Left cardiac atrium (tissue), 4 donors: ENCODE measurements at regions of chr1 and their contacts with region 1.

Region 1: DNA sequence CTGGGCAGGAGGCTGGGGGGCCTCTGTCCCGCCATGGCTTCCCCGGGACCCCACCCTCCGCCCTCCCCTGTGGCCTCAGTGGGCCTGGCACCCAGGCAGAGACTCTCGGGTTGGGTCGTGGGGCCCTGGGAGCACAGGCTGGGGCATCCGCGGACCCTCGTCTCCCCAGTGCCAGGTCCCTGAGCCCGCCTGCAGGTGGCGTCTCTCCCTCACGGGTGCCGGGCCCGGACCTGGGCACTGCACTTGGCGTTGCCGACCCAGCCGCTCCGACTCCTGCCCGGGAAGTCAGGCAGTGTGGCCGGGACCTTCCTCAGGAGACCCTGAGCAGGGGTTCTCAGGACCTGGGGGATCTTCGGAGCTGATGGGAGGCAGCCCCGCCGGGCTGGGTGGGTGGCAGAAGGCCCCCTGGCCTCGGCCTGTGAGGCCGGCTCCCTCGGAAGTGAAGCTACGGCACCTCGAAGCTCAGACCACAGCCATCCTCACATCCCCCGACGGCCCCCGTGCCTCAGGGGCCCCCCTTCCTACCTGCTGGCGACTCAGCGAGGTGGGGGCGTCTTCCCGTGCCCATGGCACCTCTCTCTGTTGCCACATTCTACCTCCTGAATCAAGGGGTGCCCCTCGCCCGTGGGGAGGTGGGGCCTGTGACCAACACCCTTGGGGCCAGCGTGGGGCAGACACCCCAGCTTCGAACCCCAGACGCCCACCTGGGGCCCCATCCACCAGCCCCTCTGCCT is 6.4 kb upstream of the C1orf159 start:
- DNase-seq: peak; percentile 87
- ATAC-seq: peak; percentile 94 to 95

Region 2: GRCh38 chr1:1253972-1254666 is 131.9 kb after region 1 on chr1:
- intact Hi-C with region 1: loop called (anchors 2 to 5 kb)
- DNase-seq: no peak
- ATAC-seq: no peak

Region 3: GRCh38 chr1:1291548-1292441 is 169.6 kb after region 1 on chr1:
- intact Hi-C with region 1: loop called in 1 of 2 experiments (anchors 2 kb)
- DNase-seq: peak; percentile 77
- ATAC-seq: peak; percentile 69 to 79

Region 4: DNA sequence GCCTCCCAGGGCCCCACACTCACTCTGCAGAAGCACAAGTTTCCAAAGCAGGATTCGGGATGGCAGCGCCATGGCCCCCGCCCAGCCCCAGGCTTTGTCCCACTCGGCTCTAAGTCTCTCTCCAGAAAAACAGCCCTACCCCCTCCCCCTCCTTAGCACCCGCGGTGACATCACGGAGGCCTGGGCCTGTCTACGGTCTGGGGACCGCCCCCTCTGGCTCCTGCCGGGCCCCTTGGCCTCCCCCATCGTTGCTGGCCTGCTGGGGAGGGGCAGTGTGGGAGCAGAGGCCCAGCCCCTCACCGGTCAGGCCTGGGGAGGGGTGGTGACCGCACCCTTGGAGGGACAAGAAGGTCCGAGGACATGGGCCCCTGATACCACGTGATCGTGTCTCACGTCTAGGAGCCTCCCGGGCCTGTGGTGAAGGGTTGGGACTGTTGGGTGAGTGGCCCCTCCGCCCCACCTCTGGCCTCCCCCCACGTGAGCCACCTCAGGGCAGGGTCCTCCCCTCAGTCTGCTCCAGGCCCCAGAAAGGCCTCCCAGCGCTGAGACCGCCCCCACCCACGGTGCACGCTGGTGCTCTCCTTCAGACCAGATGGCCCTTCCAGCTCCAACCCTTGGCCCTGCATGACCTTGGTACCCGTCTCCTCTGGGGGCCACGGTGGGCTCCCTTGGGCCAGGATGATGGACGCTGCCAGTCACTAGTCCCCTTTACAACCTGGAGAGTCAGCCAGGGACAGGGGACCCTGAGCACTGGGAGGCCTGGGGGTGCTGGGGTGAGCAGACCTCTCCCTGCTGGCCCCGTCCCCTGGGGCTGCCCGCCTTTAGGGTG is 236.4 kb after region 1 on chr1 and contains the start of gene MXRA8:
- intact Hi-C with region 1: no loop called
- DNase-seq: peak; percentile 82
- ATAC-seq: peak; percentile 68 to 69
- total RNA-seq, gene MXRA8: 38.3 to 44.3 TPM